IMR-90 (cell line): ENCODE measurements at regions of chr10 and their contacts with region 1.

Region 1: GRCh38 chr10:118310822-118311221 is 31.3 kb downstream of the FAM204A start:
- DNase-seq: peak; percentile 48
- ATAC-seq: peak; percentile 36
- H3K4me3 ChIP-seq: no peak overlapping the region
- H3K27ac ChIP-seq: peak overlapping the region; percentile 88; the same call in 1 of the 2 replicates
- H3K4me1 ChIP-seq: peaks cover 13% of the 10 kb centered on the region
- H3K27me3 ChIP-seq: no peaks in the 10 kb centered on the region
- CTCF ChIP-seq: no peak
- POLR2A ChIP-seq: no peak
- RAD21 ChIP-seq: no peak

Region 2: DNA sequence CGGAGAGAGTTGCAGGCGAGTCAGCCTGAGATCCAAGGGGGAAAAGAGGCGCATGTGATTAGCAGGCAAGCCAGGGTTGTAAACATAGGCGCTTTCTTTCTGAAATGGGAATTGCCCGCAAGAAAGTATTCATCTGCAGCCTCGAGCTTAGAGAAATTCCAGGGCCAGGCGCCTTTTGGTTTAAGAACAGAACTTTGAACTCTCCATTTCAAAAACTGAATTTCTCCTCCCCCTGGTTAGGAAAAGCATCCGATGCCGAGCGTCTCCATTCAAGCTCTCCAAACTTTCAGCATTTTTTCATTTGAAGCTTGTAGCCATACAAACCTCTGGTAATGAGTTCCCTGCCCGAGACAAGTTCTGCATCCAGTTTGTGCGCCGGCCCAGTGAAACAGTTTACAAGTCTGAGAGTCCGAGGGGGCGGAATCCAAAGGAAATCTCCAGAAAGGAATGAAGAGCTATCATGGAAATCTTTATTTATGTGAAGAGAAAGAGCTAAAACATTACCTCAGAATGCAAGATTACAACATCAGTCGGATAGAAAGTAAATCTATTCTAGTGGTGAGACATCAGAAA is 38.6 kb before region 1 on chr10:
- CTCF ChIA-PET with region 1: no interaction called
- POLR2A ChIA-PET with region 1: no interaction called
- dilution Hi-C with region 1: no loop called
- in situ Hi-C with region 1: no loop called
- intact Hi-C with region 1: loop called (anchors 2 kb)
- DNase-seq: peak; percentile 43
- ATAC-seq: peak; percentile 85
- H3K4me3 ChIP-seq: peak overlapping the region; percentile 27; the same call in 1 of the 2 replicates
- H3K27ac ChIP-seq: peak overlapping the region; percentile 38; the same call in 1 of the 2 replicates
- H3K4me1 ChIP-seq: peaks cover 1% of the 10 kb centered on the region; the same call in 1 of the 2 replicates
- H3K27me3 ChIP-seq: peaks cover 3% of the 10 kb centered on the region; the same call in 1 of the 2 replicates
- CTCF ChIP-seq: no peak
- POLR2A ChIP-seq: no peak
- RAD21 ChIP-seq: no peak

Region 3: GRCh38 chr10:118698421-118698820 is 387.6 kb after region 1 on chr10:
- CTCF ChIA-PET with region 1: no interaction called
- POLR2A ChIA-PET with region 1: no interaction called
- dilution Hi-C with region 1: no loop called
- in situ Hi-C with region 1: no loop called
- intact Hi-C with region 1: loop called (anchors 10 kb)
- DNase-seq: peak; percentile 72
- ATAC-seq: peak; percentile 44
- H3K4me3 ChIP-seq: no peak overlapping the region
- H3K27ac ChIP-seq: no peak overlapping the region
- H3K4me1 ChIP-seq: peaks cover 8% of the 10 kb centered on the region
- H3K27me3 ChIP-seq: no peaks in the 10 kb centered on the region
- CTCF ChIP-seq: no peak
- POLR2A ChIP-seq: no peak
- RAD21 ChIP-seq: no peak